Heart right ventricle (tissue), 16 donors: ENCODE measurements at regions of chr12 and their contacts with region 1.

Region 1: GRCh38 chr12:10562306-10562933 is 51.0 kb downstream of the MAGOHB start:
- DNase-seq: no peak
- ATAC-seq: no peak
- H3K4me3 ChIP-seq: no peak overlapping the region
- H3K27ac ChIP-seq: no peak overlapping the region
- H3K4me1 ChIP-seq: no peaks in the 10 kb centered on the region
- H3K27me3 ChIP-seq: peaks cover 0 to 35% (median 4%) of the 10 kb centered on the region in 7 donors
- CTCF ChIP-seq: peak; percentile 51 to 82 (median 73)

Region 2: DNA sequence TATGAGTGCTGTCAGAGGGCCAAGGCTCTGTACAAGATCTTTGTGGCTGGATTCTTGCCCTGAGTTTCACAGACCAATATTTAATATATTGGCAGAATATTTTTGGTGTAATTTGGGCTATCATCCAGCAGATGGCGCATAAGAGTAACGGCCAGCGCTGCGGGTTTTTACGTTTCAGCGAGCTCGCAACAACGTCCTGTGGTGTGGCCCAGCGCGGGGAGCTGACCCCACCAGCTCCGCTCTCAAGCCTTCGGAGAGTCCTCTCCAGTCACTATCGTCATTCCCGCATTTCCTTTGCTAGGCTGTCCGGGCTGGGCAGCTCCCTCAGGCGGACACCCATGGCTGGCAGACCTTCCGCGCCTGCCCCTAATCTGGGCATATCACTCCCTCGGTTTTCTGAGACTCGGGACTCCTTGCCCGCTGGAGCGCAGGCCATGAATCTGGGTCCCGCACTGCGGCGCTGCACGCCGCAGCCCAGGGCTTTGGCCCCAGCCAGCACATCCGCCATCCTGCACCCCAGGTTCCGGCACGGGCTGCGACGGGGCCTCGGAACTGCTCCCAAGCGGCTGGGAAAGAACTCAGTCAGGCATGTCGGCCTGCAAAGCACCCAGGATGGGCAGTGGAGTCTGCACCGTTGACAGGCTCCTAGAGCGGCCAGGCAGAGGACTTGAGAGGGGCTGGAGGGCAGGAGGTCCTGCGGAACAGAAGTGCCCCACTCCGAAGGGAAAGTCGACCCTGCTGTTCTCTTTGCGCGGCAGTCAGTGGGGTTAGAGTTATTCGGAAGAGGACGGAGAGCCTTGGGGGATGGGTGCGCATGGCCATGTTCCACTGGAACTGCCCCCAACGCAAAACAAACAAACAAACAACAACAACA is 408.9 kb before region 1 on chr12:
- intact Hi-C with region 1: loop called in 3 of 10 experiments (anchors 10 kb)
- DNase-seq: peak; percentile 67 to 70
- ATAC-seq: peak; percentile 90 to 95 (median 94)
- H3K4me3 ChIP-seq: peak overlapping the region; percentile 47 to 69 (median 64)
- H3K27ac ChIP-seq: peak overlapping the region in 9 of 10 donors; percentile 64 to 92 (median 83)
- H3K4me1 ChIP-seq: peaks cover 0 to 16% (median 0%) of the 10 kb centered on the region in 9 donors
- H3K27me3 ChIP-seq: no peaks in the 10 kb centered on the region
- CTCF ChIP-seq: peak; percentile 73 to 90 (median 81)

Region 3: GRCh38 chr12:10235761-10236631 is 326.4 kb before region 1 on chr12:
- intact Hi-C with region 1: loop called (anchors 1 to 10 kb)
- DNase-seq: no peak
- ATAC-seq: peak in 7 of 8 donors; percentile 52 to 83 (median 82)
- H3K4me3 ChIP-seq: no peak overlapping the region
- H3K27ac ChIP-seq: no peak overlapping the region
- H3K4me1 ChIP-seq: no peaks in the 10 kb centered on the region
- H3K27me3 ChIP-seq: no peaks in the 10 kb centered on the region
- CTCF ChIP-seq: peak; percentile 77 to 93 (median 88)

Region 4: DNA sequence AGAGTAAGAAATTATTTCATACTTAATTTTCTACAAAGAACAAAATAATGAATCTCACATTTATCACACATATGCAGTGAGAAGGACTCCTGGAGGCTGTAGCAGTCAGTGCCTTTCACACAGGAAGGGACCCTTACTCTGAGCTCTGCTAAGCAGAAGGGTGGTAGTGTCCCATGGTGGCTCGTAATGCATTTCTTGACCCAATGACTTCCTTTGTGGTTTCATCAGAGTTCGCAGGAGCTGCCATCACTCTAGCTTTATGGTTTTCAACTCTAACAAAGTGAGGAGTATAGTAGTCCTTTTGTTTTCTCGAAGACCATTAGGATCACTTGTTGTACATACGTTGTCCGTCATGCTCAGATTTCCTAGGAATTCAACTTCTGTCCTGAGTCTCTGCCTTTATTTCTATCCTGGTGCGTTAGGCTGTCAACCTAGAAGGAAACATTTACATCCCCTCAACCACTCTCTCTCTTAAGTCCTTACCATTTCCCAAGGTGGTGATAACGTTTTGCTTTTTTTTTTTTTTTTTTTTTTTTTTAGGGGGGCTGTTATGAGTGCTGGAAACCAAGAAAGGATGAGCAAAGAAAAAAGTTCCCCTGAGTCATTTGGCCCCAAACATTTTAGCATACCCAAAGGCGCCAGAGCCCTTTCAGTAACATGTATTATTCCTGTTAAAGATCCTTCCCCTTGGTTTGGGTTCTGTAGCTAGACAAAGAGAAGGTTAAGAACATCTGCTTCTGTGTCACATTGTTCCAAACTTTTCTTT is 312.5 kb before region 1 on chr12:
- intact Hi-C with region 1: loop called in 1 of 10 experiments (anchors 5 kb)
- DNase-seq: no peak
- ATAC-seq: no peak
- H3K4me3 ChIP-seq: no peak overlapping the region
- H3K27ac ChIP-seq: no peak overlapping the region
- H3K4me1 ChIP-seq: no peaks in the 10 kb centered on the region
- H3K27me3 ChIP-seq: no peaks in the 10 kb centered on the region
- CTCF ChIP-seq: no peak

Region 5: DNA sequence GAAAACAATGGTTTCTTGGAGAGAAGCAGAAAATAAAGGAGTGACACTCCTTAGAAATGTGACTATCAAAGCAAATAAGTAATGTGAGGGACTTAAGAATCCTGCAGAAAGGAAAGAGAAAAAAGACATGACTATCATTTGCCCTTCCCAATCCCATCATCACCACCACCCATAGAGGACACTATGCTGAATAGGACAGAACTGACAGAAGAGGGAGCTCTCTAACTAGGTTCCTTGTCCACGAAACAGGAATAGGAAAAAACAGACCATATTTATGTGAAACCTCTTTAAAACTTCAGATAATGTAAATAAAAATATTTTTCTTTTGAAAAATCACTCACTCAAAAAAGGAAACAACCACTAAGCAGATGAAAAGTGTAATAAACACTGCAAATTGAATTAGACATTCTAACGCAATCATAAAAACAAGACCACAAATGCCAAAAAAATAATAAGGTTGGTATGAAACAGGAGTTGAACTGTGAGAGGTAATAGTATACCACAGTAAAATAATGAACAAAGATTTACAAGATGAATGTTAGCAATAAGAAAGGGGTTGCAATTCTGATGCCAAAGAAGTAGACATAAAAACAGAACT is 230.7 kb before region 1 on chr12:
- intact Hi-C with region 1: loop called (anchors 2 to 10 kb)
- DNase-seq: no peak
- ATAC-seq: peak in 6 of 8 donors; percentile 64 to 74 (median 70)
- H3K4me3 ChIP-seq: no peak overlapping the region
- H3K27ac ChIP-seq: no peak overlapping the region
- H3K4me1 ChIP-seq: no peaks in the 10 kb centered on the region
- H3K27me3 ChIP-seq: no peaks in the 10 kb centered on the region
- CTCF ChIP-seq: peak; percentile 33 to 84 (median 73)